ENCODE measurements at regions of chr4 and their contacts with region 1.

Region 1: GRCh38 chr4:48141048-48141447 is 7.0 kb upstream of the TXK start:
- DNase-seq: no peak
- ATAC-seq: no peak
- H3K4me3 Mint-ChIP-seq: no peak overlapping the region
- H3K27ac Mint-ChIP-seq: no peak overlapping the region
- H3K4me1 Mint-ChIP-seq: peaks cover 46% of the 10 kb centered on the region
- H3K27me3 Mint-ChIP-seq: no peaks in the 10 kb centered on the region

Region 2: DNA sequence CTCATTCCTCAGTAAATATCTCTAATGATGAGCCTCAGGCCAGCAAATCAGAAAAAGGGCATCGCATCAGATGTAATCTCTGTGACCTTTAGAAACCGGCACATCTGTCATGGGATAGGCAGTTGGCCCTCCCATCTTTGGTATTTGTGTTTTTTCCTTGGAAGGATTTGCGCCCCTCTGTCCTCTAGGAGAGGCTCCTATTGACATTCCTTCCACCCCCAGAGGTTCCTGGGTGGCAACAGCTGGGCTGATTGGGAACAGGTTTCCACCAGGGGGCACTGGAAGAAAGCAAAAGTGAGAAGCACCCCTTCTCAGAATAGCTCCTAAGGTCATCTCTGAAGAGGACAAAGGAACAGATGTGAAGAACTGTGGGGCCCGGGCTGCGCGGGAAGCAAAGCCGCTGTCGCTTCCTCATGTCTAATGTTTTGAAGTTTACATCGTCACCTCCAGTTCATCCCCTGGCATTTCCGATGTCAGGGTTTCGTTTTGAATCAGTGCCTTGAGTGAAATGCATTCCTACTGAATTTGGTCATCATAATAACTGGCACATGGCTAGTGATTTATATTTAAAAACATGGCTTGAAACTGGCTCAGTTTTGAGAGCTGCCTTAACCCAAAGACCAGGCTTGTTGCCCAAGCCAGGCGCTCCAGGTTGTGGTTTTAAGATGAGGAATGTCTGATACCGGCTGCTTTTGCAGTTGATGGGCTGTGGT is 13.2 kb before region 1 on chr4:
- POLR2A ChIA-PET with region 1: interaction called, 196 read pairs
- DNase-seq: peak; percentile 77
- ATAC-seq: peak; percentile 80
- H3K4me3 Mint-ChIP-seq: peak overlapping the region; percentile 68
- H3K27ac Mint-ChIP-seq: peak overlapping the region; percentile 96
- H3K4me1 Mint-ChIP-seq: peaks cover 75% of the 10 kb centered on the region
- H3K27me3 Mint-ChIP-seq: no peaks in the 10 kb centered on the region